Activated CD4-positive, alpha-beta T cell treated with anti-CD3 and anti-CD28 coated beads for 36 hours (primary cell): ENCODE measurements at regions of chr9 and their contacts with region 1.

Region 1: DNA sequence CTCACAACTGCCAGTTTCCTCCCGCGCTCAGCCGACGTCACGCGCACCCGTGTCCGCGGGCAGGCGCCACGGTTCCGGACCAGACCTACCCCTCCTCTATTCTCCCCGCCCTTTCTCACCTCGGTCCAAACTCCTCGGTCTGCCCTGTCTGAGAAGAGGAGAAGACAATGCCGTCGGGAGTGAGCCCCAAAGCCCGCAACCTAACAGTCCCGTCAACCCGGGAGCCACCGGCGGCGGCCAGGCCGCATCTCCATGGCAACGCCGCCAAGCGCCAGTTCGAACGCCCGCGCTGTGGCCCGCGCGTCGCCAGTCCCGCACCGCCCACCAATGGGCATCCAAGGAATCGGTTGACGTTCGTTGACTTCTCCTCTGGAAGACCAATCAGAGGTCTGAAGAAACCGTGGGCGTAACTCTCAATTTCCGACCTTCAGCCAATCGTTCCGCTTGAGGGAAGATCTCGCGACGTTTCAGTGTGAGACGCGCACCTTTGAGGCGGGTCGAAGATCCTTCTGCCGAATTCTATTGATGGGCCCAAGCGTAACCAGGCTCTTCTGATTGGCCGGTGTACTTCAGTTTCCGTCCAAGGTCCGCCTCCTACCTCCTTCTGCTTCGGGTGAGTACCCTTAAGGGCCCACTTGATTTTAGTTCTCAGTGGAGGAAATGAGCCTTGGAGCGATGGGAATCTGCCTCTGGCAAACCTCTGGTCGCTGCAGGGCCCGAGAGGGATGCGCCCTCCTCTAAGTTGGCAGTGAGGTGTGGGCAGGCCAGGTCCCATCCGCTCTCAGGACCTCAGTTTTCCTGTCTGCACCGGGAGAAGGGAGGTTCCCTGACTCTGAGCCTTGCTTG is at the starts of genes KIF24 and NUDT2:
- DNase-seq: peak; percentile 98
- ATAC-seq: peak; percentile 97
- H3K4me3 Mint-ChIP-seq: peak within 1 kb of the TSS; percentile 95
- H3K27ac Mint-ChIP-seq: peak within 1 kb of the TSS; percentile 98
- H3K4me1 Mint-ChIP-seq: peaks cover 32% of the 10 kb centered on the region
- H3K27me3 Mint-ChIP-seq: no peaks in the 10 kb centered on the region
- total RNA-seq, gene KIF24: 5.9 to 7.7 TPM
- total RNA-seq, gene NUDT2: 14.9 to 22.9 TPM

Region 2: GRCh38 chr9:34048923-34049697 is 280.1 kb before region 1 on chr9:
- CTCF ChIA-PET with region 1: no interaction called
- POLR2A ChIA-PET with region 1: no interaction called
- intact Hi-C with region 1: loop called (anchors 1 kb)
- DNase-seq: peak; percentile 98
- ATAC-seq: peak; percentile 84
- H3K4me3 Mint-ChIP-seq: peak overlapping the region; percentile 90
- H3K27ac Mint-ChIP-seq: peak overlapping the region; percentile 99
- H3K4me1 Mint-ChIP-seq: peaks cover 38% of the 10 kb centered on the region
- H3K27me3 Mint-ChIP-seq: no peaks in the 10 kb centered on the region

Region 3: DNA sequence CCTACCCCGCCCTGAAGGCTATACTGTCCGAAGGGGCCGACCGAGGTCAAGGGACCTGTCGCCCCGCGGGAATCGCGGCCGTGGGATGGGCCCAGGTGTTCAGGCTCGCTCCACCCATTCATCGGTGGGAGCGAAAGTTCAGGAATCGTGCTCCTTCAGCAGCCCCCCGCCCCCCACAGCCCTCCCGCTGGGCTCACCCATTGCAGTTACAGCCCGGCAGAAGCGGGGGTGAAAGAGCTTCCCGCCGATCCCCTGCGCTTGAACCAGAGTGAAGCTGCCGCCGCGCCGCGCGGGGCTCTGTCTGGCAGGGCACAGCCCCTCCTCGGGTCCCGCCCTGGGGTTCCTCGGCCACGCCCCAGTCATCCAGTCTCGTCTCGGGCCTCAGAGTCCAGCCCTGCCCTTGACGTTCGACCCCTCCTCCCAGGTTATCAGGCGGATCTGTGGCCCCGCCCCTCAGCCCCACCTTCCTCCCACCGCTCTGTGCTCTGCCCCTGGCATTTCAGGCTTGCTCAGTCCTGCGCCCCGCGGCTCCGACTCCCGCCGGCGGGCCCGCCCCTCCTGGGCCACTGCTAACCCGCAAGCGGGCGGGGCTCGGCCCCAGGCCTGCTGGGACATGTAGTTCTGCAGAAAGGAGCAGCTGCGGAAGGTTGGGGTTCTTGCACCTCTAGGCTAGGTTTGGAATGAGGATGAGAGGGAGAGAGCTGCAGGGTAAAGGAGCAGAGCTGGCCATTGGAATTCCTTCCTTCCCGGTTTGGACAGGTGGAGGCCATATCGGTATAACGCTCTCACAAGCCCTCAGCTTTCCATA is 47.6 kb after region 1 on chr9 and contains the start of gene MYORG:
- CTCF ChIA-PET with region 1: interaction called, 76 read pairs
- POLR2A ChIA-PET with region 1: no interaction called
- intact Hi-C with region 1: loop called (anchors 1 kb)
- DNase-seq: peak; percentile 98
- ATAC-seq: peak; percentile 82
- H3K4me3 Mint-ChIP-seq: peak within 1 kb of the TSS; percentile 76
- H3K27ac Mint-ChIP-seq: peak within 1 kb of the TSS; percentile 62
- H3K4me1 Mint-ChIP-seq: peaks cover 36% of the 10 kb centered on the region
- H3K27me3 Mint-ChIP-seq: no peaks in the 10 kb centered on the region
- total RNA-seq, gene MYORG: 2.2 to 2.3 TPM

Region 4: DNA sequence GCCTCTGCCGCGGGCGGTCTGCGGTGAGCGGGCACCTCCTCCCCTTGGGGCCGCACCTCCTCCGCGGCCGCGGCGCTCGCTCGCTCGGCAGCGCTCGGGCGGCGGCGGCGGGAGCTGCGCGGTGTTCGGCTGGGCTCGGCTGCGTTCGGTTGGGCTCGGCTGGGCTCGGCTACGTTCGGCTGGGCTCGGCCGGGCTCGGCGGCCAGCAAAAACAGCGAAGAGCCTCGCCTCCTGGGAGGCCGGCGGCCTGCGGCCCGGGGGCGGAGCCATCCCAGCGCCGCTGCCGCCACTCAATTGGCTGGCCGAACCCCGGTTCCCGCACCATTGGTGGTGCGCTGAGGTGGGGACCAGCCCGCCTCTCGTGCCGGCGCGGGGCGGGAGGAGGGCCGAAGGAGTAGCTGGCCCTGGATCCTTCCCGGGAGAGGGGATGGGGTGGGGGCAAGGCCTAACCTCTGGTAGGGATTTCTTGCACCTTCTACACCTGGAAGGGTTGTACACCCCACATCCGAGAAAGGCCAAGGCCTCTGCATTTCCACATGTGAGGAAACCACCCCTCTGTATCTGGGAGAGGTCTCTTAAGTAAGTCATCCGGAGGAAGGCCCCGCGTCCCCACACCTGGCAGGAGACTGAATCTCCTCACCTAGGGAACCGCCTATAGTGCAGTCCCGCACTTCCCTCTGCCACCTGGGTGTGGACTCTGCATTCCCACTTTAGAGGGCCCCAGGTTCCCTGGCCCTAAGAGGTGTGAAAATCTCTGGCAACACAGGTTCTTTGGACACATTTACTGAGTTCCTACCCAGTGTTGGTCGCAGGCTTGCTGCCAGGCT is 194.0 kb after region 1 on chr9 and contains the start of gene ENHO:
- CTCF ChIA-PET with region 1: no interaction called
- POLR2A ChIA-PET with region 1: no interaction called
- intact Hi-C with region 1: loop called in 1 of 2 experiments (anchors 1 kb)
- DNase-seq: peak; percentile 93
- ATAC-seq: peak; percentile 99
- H3K4me3 Mint-ChIP-seq: peak within 1 kb of the TSS; percentile 54
- H3K27ac Mint-ChIP-seq: no peak within 1 kb of the TSS
- H3K4me1 Mint-ChIP-seq: peaks cover 24% of the 10 kb centered on the region
- H3K27me3 Mint-ChIP-seq: peaks cover 11% of the 10 kb centered on the region
- total RNA-seq, gene ENHO: not detected

Region 5: DNA sequence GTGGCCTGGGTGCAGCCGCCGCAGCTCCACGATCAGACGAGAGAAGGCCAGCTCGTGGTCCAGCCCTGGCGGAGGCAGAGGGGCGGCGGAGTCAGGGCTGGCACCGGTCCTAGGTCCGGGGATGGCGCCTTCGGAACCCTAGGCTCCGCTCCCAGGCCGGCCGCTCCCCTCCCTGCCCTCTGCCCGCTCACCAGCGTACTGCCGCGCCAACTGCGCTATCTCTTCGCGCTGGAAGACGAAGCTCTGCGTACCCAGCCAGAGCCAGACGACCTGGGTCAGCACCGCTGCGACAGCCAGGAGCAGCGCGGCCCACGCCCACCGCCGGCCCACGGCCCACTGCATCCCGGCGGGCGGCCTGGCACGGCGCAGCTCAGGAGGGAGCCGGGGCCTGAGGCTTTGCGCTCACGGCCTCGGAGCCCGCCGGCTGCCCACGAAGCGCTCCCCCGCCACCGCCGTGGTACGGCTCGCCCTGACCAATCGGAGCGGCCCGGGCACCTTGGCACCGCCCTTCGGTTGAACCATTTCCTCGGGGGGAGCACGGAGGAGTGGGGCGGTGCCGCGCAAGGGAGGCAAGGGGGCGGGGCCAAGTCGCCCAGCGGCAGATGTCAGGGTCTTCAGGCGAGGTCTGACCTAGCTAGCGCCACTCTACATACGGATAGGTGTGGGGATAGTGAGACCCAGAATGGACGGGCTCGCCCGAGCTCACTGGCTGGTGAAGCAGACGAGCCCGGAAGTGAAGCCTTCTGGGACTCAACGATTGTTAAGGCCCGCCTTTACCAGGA is 308.3 kb after region 1 on chr9 and contains the start of gene SIGMAR1:
- CTCF ChIA-PET with region 1: no interaction called
- POLR2A ChIA-PET with region 1: no interaction called
- intact Hi-C with region 1: loop called in 1 of 2 experiments (anchors 2 kb)
- DNase-seq: peak; percentile 96
- ATAC-seq: peak; percentile 94
- H3K4me3 Mint-ChIP-seq: peak within 1 kb of the TSS; percentile 84
- H3K27ac Mint-ChIP-seq: peak within 1 kb of the TSS; percentile 92
- H3K4me1 Mint-ChIP-seq: peaks cover 40% of the 10 kb centered on the region
- H3K27me3 Mint-ChIP-seq: no peaks in the 10 kb centered on the region
- total RNA-seq, gene SIGMAR1: 63.6 to 68.0 TPM